MCF 10A (cell line): ENCODE measurements at regions of chr13 and their contacts with region 1.

Region 1: DNA sequence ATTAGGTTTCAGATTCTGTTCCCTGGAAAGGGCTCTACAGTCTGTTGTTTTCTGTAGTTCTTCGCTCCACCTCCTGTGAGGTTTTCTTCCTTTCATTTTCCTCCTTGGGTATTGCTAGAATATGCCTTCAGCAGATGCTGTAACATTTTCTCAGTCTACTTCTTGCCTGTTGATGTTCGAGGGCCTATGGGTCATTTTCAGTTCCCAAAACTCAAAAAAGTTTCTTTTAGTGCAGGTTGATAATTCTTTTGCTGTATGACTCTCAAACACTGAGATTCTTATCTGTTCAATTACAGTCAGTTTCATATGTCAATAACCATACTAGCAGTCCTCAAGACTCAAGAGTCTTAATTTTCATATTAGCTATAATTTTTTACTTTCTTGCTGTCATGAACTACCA is 268.3 kb downstream of the RFC3 start:
- DNase-seq: no peak
- H3K4me3 Mint-ChIP-seq: no peak overlapping the region
- H3K27ac Mint-ChIP-seq: no peak overlapping the region
- H3K4me1 Mint-ChIP-seq: no peaks in the 10 kb centered on the region
- H3K27me3 Mint-ChIP-seq: no peaks in the 10 kb centered on the region
- CTCF ChIP-seq: no peak

Region 2: DNA sequence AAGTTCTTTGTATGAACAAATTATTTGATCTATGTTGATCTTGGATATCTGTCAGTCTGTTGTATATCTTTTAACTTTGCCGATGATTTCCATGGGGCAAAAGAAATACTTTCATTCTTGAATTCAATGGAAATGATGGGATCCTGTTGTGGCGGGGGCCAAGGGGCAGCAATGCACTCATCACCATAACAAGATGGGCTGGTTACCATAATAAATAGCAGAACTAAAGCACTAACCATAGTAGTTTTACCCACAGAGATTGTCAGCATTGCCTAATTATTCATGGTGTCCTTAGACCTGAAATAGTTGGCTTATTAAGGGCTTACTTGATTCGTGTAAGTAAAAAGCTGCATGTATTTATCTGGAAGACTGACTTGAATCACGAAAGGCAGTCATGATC is 41.2 kb after region 1 on chr13:
- CTCF ChIA-PET with region 1: no interaction called
- POLR2A ChIA-PET with region 1: no interaction called
- intact Hi-C with region 1: loop called (anchors 2 kb)
- DNase-seq: no peak
- H3K4me3 Mint-ChIP-seq: no peak overlapping the region
- H3K27ac Mint-ChIP-seq: no peak overlapping the region
- H3K4me1 Mint-ChIP-seq: no peaks in the 10 kb centered on the region
- H3K27me3 Mint-ChIP-seq: no peaks in the 10 kb centered on the region
- CTCF ChIP-seq: no peak

Region 3: GRCh38 chr13:34277936-34278335 is 191.7 kb after region 1 on chr13:
- CTCF ChIA-PET with region 1: no interaction called
- POLR2A ChIA-PET with region 1: no interaction called
- intact Hi-C with region 1: no loop called
- DNase-seq: no peak
- H3K4me3 Mint-ChIP-seq: no peak overlapping the region
- H3K27ac Mint-ChIP-seq: no peak overlapping the region
- H3K4me1 Mint-ChIP-seq: no peaks in the 10 kb centered on the region
- H3K27me3 Mint-ChIP-seq: no peaks in the 10 kb centered on the region
- CTCF ChIP-seq: no peak